Activated T-helper 1 cell treated with anti-CD3 and anti-CD28 coated beads, Interleukin-12 subunit alpha, Interleukin-12 subunit beta, Interleukin-2, Interleukin-4 antibody, amounts not matched to agents 30 ng/mL and 10 ng/mL and 1 ng/mL, durations not matched to agents 14 hours and 24 hours and 36 hours (primary cell): ENCODE measurements at regions of chr14 and their contacts with region 1.

Region 1: DNA sequence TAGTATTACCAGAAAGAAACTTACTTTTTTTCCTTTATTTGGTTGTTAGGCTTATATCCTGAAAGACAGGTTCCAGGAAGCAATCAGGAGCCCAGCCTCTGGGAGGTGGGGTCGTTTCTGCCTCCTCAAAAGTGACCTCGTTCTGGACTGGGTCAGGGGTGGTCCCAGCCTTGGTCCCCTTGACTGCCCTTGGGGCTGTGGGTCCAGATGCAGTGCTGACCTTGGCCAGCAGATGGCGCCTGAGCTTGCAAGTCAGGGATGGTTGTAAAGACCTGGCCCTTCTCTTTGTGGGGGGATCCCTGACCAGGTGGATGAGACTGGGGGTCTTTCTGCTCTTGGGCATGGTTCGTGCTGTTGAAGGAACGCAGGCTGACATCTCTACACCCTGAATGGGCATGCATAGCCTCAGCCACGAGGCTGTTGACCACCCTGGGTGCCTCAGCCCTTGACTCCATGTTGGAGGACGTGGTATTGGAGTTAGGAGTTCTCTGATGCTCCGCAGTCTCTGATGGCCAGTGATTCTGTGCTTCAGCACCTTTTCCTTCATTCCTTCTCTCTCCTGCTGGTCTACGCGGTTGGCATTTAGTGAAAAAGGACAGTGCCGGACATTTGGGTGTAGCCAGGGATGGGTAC is 62.4 kb downstream of the ADCK1 start:
- DNase-seq: peak; percentile 56
- H3K4me3 Mint-ChIP-seq: no peak overlapping the region
- H3K27ac Mint-ChIP-seq: no peak overlapping the region
- H3K4me1 Mint-ChIP-seq: no peaks in the 10 kb centered on the region
- H3K27me3 Mint-ChIP-seq: no peaks in the 10 kb centered on the region

Region 2: GRCh38 chr14:77526266-77526665 is 336.0 kb before region 1 on chr14:
- intact Hi-C with region 1: no loop called
- DNase-seq: no peak
- H3K4me3 Mint-ChIP-seq: no peak overlapping the region
- H3K27ac Mint-ChIP-seq: no peak overlapping the region
- H3K4me1 Mint-ChIP-seq: no peaks in the 10 kb centered on the region
- H3K27me3 Mint-ChIP-seq: no peaks in the 10 kb centered on the region

Region 3: GRCh38 chr14:77965919-77966435 is 103.7 kb after region 1 on chr14:
- intact Hi-C with region 1: no loop called
- DNase-seq: peak; percentile 48
- H3K4me3 Mint-ChIP-seq: peak overlapping the region; percentile 76
- H3K27ac Mint-ChIP-seq: peak overlapping the region; percentile 66
- H3K4me1 Mint-ChIP-seq: peaks cover 6% of the 10 kb centered on the region
- H3K27me3 Mint-ChIP-seq: no peaks in the 10 kb centered on the region

Region 4: DNA sequence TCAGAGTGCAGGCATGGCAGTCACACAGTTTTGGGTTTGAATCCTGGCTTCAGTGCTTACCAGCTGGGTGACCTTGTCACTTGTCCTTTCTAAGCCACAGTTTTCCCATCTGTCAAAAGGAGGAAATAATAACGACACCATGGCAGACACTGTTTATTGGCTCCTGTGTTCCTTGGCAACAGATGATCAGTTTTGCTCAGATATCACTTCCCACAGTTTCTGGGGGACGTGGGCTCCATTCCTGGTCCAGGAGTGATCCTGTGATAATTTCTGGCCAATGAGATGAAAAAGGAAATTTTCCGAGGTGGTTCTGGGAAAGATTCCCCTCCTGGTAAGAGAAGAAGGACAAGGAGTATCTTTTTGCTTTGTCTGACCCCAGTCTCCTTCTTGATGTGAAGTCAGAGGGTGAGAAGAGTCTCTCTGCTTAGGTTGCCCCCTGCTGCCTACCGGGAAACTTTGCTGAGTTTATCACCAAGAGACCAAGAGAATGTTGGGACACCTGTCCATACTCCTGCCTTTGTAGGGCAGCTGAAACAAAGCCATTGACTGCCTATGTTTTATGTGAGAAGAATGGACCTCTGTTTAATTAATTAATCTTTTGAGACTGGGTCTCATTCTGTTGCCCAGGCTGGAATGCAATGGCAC is 129.0 kb after region 1 on chr14:
- intact Hi-C with region 1: loop called (anchors 1 kb)
- DNase-seq: no peak
- H3K4me3 Mint-ChIP-seq: no peak overlapping the region
- H3K27ac Mint-ChIP-seq: no peak overlapping the region
- H3K4me1 Mint-ChIP-seq: no peaks in the 10 kb centered on the region
- H3K27me3 Mint-ChIP-seq: no peaks in the 10 kb centered on the region

Region 5: GRCh38 chr14:78073652-78074051 is 211.4 kb after region 1 on chr14:
- intact Hi-C with region 1: loop called (anchors 2 kb)
- DNase-seq: no peak
- H3K4me3 Mint-ChIP-seq: no peak overlapping the region
- H3K27ac Mint-ChIP-seq: no peak overlapping the region
- H3K4me1 Mint-ChIP-seq: no peaks in the 10 kb centered on the region
- H3K27me3 Mint-ChIP-seq: peaks cover 8% of the 10 kb centered on the region

Region 6: DNA sequence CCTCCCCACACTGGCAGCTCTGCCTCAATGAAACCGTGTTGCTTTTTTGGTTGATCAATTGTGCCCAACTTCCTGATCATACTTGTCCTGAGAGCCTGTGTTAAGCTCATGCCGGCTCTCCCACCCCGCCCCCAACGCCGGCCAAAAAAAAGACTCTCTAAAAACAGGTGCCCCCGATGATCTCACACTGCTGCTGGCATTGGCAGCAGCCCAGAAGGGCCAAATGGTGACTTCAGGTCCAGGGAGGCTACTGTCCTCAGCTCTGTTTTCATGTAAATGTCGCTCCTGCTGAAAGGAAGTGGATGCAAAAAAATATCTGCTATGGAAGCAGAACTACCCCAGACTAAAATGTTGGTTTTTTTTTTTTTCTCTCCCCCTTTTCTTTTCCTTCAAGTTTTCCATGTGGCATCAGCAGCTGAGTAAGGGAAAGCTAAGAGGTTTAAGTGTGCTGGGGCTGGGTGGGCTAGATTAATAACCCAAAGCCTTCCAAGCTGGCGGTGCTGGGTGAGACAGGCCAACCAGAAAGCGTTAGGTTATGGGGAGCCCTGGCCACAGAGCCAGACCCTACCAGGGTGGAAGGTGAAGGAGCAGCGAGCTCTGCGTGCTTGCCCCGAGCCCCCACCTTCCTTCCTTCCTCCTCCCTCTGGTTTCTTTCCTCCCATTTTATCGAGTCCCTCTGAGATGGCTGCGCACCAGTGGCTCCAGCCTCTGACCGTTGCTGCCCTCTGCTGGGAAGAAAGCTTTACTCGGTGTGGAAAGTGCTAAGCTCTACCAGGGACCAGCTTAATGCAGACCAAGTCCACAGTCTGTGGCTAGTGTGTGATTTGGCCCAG is 704.0 kb after region 1 on chr14:
- intact Hi-C with region 1: loop called (anchors 1 kb)
- DNase-seq: peak; percentile 19
- H3K4me3 Mint-ChIP-seq: no peak overlapping the region
- H3K27ac Mint-ChIP-seq: no peak overlapping the region
- H3K4me1 Mint-ChIP-seq: no peaks in the 10 kb centered on the region
- H3K27me3 Mint-ChIP-seq: no peaks in the 10 kb centered on the region